PC-9 (cell line): ENCODE measurements at regions of chr6 and their contacts with region 1.

Region 1: GRCh38 chr6:113352029-113352801 is 504.9 kb upstream of the MARCKS start:
- DNase-seq: peak; percentile 77 to 100
- H3K4me3 ChIP-seq: peak overlapping the region; percentile 27
- H3K27ac ChIP-seq: peak overlapping the region; percentile 94
- H3K4me1 ChIP-seq: peaks cover 59% of the 10 kb centered on the region
- H3K27me3 ChIP-seq: no peaks in the 10 kb centered on the region
- CTCF ChIP-seq: no peak

Region 2: DNA sequence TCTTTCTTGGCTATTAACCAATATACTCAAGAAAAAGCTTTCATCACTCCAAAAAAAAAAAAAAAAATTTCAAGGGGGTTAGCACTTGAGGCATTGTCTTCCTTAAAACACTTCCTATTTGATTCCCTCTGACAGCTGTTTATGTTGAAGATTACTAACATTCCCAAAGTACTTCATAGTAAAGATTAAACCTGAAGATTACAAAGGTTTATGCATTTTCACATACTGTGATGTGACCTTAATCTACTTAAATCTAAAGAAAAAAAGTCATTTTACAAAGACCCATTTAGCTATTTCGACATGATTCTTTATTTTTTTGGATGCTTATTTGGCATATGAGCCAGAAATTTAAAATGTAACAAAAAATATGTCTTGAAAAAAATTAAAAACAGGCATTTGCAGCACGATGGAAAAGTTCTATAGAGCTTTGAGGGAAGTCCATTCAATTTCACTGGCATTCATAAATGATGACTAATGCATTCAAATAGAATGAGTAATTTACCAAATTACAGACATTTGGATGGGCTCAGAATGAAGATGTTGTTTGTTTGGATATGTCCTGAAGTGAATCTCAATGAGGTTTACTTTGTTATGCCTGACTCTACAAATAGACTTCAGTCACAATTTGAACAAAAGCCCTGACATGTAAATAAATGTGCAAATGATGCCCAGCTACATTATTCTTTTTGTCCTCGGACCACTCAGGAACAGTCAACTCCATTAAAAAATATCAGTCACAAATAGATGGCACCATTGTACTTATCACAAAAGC is 169.7 kb before region 1 on chr6:
- CTCF ChIA-PET with region 1: no interaction called
- POLR2A ChIA-PET with region 1: no interaction called
- intact Hi-C with region 1: loop called (anchors 2 kb)
- DNase-seq: peak in 1 of 2 experiments; percentile 79
- H3K4me3 ChIP-seq: no peak overlapping the region
- H3K27ac ChIP-seq: peak overlapping the region; percentile 30
- H3K4me1 ChIP-seq: peaks cover 18% of the 10 kb centered on the region
- H3K27me3 ChIP-seq: no peaks in the 10 kb centered on the region
- CTCF ChIP-seq: no peak

Region 3: GRCh38 chr6:113414511-113414910 is 62.3 kb after region 1 on chr6:
- CTCF ChIA-PET with region 1: no interaction called
- POLR2A ChIA-PET with region 1: no interaction called
- intact Hi-C with region 1: loop called (anchors 1 kb)
- DNase-seq: peak; percentile 35 to 66
- H3K4me3 ChIP-seq: no peak overlapping the region
- H3K27ac ChIP-seq: no peak overlapping the region
- H3K4me1 ChIP-seq: peaks cover 30% of the 10 kb centered on the region
- H3K27me3 ChIP-seq: no peaks in the 10 kb centered on the region
- CTCF ChIP-seq: peak; percentile 67; the same call in 1 of the 2 replicates

Region 4: GRCh38 chr6:113495506-113495905 is 143.3 kb after region 1 on chr6:
- CTCF ChIA-PET with region 1: no interaction called
- POLR2A ChIA-PET with region 1: no interaction called
- intact Hi-C with region 1: loop called (anchors 2 kb)
- DNase-seq: peak in 1 of 2 experiments; percentile 70
- H3K4me3 ChIP-seq: no peak overlapping the region
- H3K27ac ChIP-seq: peak overlapping the region; percentile 75
- H3K4me1 ChIP-seq: peaks cover 59% of the 10 kb centered on the region
- H3K27me3 ChIP-seq: no peaks in the 10 kb centered on the region
- CTCF ChIP-seq: no peak

Region 5: DNA sequence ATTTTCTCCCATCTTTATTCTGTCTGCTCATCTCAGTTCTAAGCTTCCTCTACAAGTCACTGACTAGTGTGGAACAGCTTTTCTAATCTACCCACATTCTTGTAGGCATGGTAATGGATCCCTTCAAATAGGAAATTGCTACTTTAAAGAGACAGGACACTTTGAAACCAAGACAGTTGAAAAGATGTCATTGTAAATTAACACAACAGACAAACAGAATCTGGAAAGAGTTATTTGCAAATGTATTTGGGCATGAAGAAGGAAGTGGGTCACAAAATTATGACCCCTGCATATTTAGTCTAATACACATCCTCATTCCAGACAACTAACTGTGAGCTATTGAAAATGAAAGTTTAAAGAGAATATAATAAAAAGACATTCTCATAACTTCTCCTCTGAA is 206.8 kb after region 1 on chr6:
- CTCF ChIA-PET with region 1: no interaction called
- POLR2A ChIA-PET with region 1: no interaction called
- intact Hi-C with region 1: loop called (anchors 10 kb)
- DNase-seq: peak in 1 of 2 experiments; percentile 77
- H3K4me3 ChIP-seq: peak overlapping the region; percentile 11; the same call in 1 of the 2 replicates
- H3K27ac ChIP-seq: peak overlapping the region; percentile 55
- H3K4me1 ChIP-seq: peaks cover 34% of the 10 kb centered on the region
- H3K27me3 ChIP-seq: no peaks in the 10 kb centered on the region
- CTCF ChIP-seq: no peak

Region 6: GRCh38 chr6:113879186-113880096 is 527.2 kb after region 1 on chr6:
- CTCF ChIA-PET with region 1: no interaction called
- POLR2A ChIA-PET with region 1: no interaction called
- intact Hi-C with region 1: loop called (anchors 5 kb)
- DNase-seq: peak; percentile 54 to 77
- H3K4me3 ChIP-seq: no peak overlapping the region
- H3K27ac ChIP-seq: peak overlapping the region; percentile 49
- H3K4me1 ChIP-seq: peaks cover 10% of the 10 kb centered on the region
- H3K27me3 ChIP-seq: no peaks in the 10 kb centered on the region
- CTCF ChIP-seq: peak; percentile 85